Activated B cell treated with CpG ODN at 0.5 μM for 24 hours (primary cell): ENCODE measurements at regions of chr13 and their contacts with region 1.

Region 1: GRCh38 chr13:41263261-41264027 is at the start of gene MTRF1:
- DNase-seq: peak; percentile 72
- ATAC-seq: peak; percentile 93
- H3K4me3 Mint-ChIP-seq: peak within 1 kb of the TSS; percentile 96
- H3K27ac Mint-ChIP-seq: peak within 1 kb of the TSS; percentile 99
- H3K4me1 Mint-ChIP-seq: peaks cover 17% of the 10 kb centered on the region
- H3K27me3 Mint-ChIP-seq: no peaks in the 10 kb centered on the region
- CTCF ChIP-seq: no peak
- total RNA-seq, gene MTRF1: 22.2 and 26.7 TPM in 2 replicates

Region 2: GRCh38 chr13:39655569-39656324 is 1607.7 kb before region 1 on chr13 and contains the start of gene COG6:
- CTCF ChIA-PET with region 1: no interaction called
- POLR2A ChIA-PET with region 1: no interaction called
- intact Hi-C with region 1: loop called (anchors 5 kb)
- DNase-seq: peak; percentile 99
- ATAC-seq: peak; percentile 91
- H3K4me3 Mint-ChIP-seq: peak within 1 kb of the TSS; percentile 91
- H3K27ac Mint-ChIP-seq: peak within 1 kb of the TSS; percentile 85
- H3K4me1 Mint-ChIP-seq: peaks cover 26% of the 10 kb centered on the region
- H3K27me3 Mint-ChIP-seq: peaks cover 2% of the 10 kb centered on the region
- CTCF ChIP-seq: no peak
- total RNA-seq, gene COG6: 28.9 and 29.6 TPM in 2 replicates

Region 3: DNA sequence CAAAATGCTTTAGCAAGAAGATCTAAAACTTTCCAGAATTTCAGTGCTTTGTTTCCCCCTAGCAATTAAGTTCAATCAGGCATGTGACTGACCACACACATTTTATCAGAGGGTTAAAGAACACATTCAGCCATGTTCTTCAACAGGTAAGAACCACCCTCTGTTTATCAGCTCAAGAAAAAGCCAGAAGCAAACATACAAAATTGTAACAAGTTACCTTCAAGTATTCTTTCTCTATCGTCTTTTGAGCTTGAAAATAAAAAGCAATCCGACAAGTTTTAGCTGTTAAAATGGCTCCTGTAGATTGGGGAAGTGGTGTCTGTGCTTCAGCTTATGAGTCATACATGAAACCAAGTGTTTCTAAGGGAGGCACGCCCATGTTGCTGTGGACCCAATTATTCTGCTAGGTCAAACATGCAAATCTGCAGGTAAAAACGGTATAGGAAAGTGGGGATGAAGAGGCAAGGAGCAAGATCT is 244.4 kb before region 1 on chr13 and contains the start of gene ELF1:
- CTCF ChIA-PET with region 1: no interaction called
- POLR2A ChIA-PET with region 1: no interaction called
- intact Hi-C with region 1: loop called (anchors 1 kb)
- DNase-seq: peak; percentile 26
- ATAC-seq: peak; percentile 87
- H3K4me3 Mint-ChIP-seq: peak within 1 kb of the TSS; percentile 94
- H3K27ac Mint-ChIP-seq: peak within 1 kb of the TSS; percentile 99
- H3K4me1 Mint-ChIP-seq: peaks cover 46% of the 10 kb centered on the region
- H3K27me3 Mint-ChIP-seq: no peaks in the 10 kb centered on the region
- CTCF ChIP-seq: no peak
- total RNA-seq, gene ELF1: 129 and 136 TPM in 2 replicates

Region 4: GRCh38 chr13:41132512-41133152 is 130.8 kb before region 1 on chr13 and contains the start of gene KBTBD6:
- CTCF ChIA-PET with region 1: no interaction called
- POLR2A ChIA-PET with region 1: no interaction called
- intact Hi-C with region 1: loop called (anchors 1 kb)
- DNase-seq: peak; percentile 83
- ATAC-seq: peak; percentile 97
- H3K4me3 Mint-ChIP-seq: peak within 1 kb of the TSS; percentile 98
- H3K27ac Mint-ChIP-seq: peak within 1 kb of the TSS; percentile 91
- H3K4me1 Mint-ChIP-seq: peaks cover 47% of the 10 kb centered on the region
- H3K27me3 Mint-ChIP-seq: no peaks in the 10 kb centered on the region
- CTCF ChIP-seq: no peak
- total RNA-seq, gene KBTBD6: 5.1 and 6.0 TPM in 2 replicates

Region 5: GRCh38 chr13:41193919-41194824 is 69.3 kb before region 1 on chr13 and contains the start of gene KBTBD7:
- CTCF ChIA-PET with region 1: no interaction called
- POLR2A ChIA-PET with region 1: interaction called, 3 read pairs
- intact Hi-C with region 1: loop called (anchors 1 kb)
- DNase-seq: peak; percentile 85
- ATAC-seq: peak; percentile 92
- H3K4me3 Mint-ChIP-seq: peak within 1 kb of the TSS; percentile 93
- H3K27ac Mint-ChIP-seq: peak within 1 kb of the TSS; percentile 94
- H3K4me1 Mint-ChIP-seq: peaks cover 54% of the 10 kb centered on the region
- H3K27me3 Mint-ChIP-seq: no peaks in the 10 kb centered on the region
- CTCF ChIP-seq: no peak
- total RNA-seq, gene KBTBD7: 5.2 and 6.4 TPM in 2 replicates

Region 6: DNA sequence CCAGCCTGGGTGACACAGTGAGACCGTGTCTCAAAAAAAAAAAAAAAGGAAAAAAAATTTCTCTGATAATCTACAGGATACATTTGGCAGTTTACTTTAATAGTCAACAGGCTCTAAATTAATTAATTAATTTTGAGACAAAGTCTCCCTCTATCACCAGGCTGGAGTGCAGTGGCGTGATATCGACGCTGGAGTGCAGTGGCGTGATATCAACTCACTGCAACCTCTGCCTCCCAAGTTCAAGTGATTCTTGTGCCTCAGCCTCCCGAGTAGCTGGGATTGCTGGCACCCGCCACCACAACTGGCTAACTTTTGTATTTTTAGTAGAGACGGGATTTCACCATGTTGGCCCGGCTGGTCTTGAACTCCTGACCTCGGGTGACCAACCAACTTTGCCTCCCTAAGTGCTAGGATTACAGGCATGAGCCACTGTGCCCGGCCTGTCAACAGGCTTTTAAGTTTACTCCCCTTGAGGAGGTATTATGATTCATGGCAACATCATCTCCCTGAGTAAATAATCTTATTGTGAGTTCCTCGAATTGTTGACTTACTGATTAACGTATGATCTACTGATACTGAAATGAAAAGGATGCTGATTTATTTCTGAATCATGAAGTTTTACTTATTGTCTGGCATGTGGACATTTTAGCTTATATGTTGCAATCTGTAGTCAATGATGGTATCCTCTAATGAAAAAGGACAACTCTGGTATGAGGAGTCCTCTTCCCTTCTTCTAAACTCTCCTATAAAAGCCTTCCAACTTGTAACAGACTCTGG is 21.3 kb after region 1 on chr13:
- CTCF ChIA-PET with region 1: no interaction called
- POLR2A ChIA-PET with region 1: no interaction called
- intact Hi-C with region 1: loop called (anchors 1 kb)
- DNase-seq: no peak
- ATAC-seq: no peak
- H3K4me3 Mint-ChIP-seq: no peak overlapping the region
- H3K27ac Mint-ChIP-seq: no peak overlapping the region
- H3K4me1 Mint-ChIP-seq: peaks cover 10% of the 10 kb centered on the region
- H3K27me3 Mint-ChIP-seq: no peaks in the 10 kb centered on the region
- CTCF ChIP-seq: no peak

Region 7: GRCh38 chr13:41365631-41366030 is 102.2 kb after region 1 on chr13:
- CTCF ChIA-PET with region 1: no interaction called
- POLR2A ChIA-PET with region 1: no interaction called
- intact Hi-C with region 1: no loop called
- DNase-seq: no peak
- ATAC-seq: no peak
- H3K4me3 Mint-ChIP-seq: no peak overlapping the region
- H3K27ac Mint-ChIP-seq: no peak overlapping the region
- H3K4me1 Mint-ChIP-seq: no peaks in the 10 kb centered on the region
- H3K27me3 Mint-ChIP-seq: no peaks in the 10 kb centered on the region
- CTCF ChIP-seq: no peak

Region 8: DNA sequence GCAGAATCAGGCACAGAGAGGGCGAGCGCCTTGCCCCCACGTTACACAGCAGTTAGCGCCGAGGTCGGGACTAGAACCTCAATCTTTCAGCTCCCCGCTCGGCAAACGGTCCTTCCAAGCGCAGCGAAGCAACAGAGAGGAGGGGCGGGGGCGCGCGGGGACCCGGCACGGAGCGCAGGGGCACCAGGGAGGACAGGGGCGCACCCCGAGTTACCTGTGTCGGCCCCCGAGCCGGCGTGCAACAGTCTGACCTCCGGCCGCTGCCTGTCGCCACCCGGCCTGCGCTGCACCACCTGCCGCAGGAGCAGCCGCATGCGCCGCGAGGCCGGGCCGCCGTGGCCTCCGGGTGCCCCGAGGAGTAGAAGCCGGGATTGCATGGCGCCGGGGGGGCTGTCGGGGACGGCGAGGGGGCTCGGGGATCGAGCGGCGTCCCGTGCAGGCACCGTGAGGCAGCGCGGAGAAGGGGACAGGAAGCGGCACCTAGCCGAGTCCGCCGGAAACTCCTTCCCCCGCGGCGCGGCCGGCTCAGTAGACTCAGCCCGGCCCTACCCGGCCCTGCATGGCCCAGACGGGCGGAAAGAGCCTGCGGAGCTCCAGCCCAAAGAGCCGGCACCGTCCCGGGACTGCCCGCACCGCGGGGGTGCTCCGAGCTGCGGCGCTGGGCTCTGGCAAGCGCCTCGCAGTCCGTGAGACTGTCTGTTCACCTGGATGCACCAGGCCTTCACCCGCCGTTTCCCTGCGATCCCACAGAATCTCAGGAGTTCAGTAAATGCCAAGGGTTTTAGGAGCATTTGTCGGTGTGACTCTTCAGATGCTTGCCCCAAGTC is 697.4 kb after region 1 on chr13 and contains the start of gene VWA8:
- CTCF ChIA-PET with region 1: no interaction called
- POLR2A ChIA-PET with region 1: no interaction called
- intact Hi-C with region 1: loop called (anchors 5 kb)
- DNase-seq: peak; percentile 79
- ATAC-seq: peak; percentile 98
- H3K4me3 Mint-ChIP-seq: peak within 1 kb of the TSS; percentile 91
- H3K27ac Mint-ChIP-seq: peak within 1 kb of the TSS; percentile 66
- H3K4me1 Mint-ChIP-seq: peaks cover 26% of the 10 kb centered on the region
- H3K27me3 Mint-ChIP-seq: peaks cover 4% of the 10 kb centered on the region
- CTCF ChIP-seq: no peak
- total RNA-seq, gene VWA8: 16.5 and 21.7 TPM in 2 replicates